ENCODE measurements at regions of chr2 and their contacts with region 1.

Region 1: DNA sequence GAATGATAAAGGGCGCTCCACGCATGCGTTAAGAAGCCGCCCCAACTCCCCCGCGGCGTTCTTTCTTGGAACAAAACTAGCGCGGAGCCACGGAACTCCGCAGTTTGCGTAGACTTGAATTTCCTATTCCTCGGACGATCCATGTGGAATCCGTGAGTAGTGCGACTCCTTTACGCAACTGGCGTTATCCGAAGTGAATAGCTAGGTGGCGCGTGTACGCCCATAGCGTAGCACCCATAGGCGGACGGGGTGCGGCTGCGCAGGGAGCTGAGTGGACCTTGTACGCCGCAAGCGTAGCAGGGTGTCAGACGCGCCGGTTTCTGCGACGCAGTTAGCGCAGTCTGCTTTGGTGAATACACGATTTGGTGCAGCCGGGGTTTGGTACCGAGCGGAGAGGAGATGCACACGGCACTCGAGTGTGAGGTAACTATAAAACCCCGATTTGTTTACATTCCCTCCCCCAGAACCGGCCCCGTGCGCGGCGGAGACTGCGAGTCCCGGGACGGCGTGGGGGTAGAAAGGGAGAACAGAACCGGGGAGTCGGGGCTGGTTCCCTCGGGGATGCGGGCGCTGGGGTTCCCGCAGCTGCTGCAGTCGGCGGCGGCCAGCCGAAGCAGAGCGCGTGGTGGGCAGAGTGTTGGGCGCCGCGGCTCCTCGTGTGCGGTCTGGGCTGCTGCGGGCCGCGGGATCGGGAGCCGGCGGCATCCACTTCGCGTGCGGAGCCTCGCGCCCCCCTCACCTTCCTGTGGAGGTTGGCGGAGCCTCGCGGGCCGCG is at the start of gene SLC39A10:
- DNase-seq: peak; percentile 99
- H3K4me3 Mint-ChIP-seq: peak within 1 kb of the TSS; percentile 98
- H3K27ac Mint-ChIP-seq: peak within 1 kb of the TSS; percentile 100
- H3K4me1 Mint-ChIP-seq: peaks cover 35% of the 10 kb centered on the region
- H3K27me3 Mint-ChIP-seq: peaks cover 3% of the 10 kb centered on the region
- total RNA-seq, gene SLC39A10: 36.1 to 37.4 TPM

Region 2: GRCh38 chr2:195318440-195319111 is 338.5 kb before region 1 on chr2:
- CTCF ChIA-PET with region 1: interaction called, 9 read pairs
- POLR2A ChIA-PET with region 1: no interaction called
- intact Hi-C with region 1: loop called (anchors 2 kb)
- DNase-seq: peak; percentile 35
- H3K4me3 Mint-ChIP-seq: no peak overlapping the region
- H3K27ac Mint-ChIP-seq: no peak overlapping the region
- H3K4me1 Mint-ChIP-seq: peaks cover 8% of the 10 kb centered on the region
- H3K27me3 Mint-ChIP-seq: no peaks in the 10 kb centered on the region

Region 3: DNA sequence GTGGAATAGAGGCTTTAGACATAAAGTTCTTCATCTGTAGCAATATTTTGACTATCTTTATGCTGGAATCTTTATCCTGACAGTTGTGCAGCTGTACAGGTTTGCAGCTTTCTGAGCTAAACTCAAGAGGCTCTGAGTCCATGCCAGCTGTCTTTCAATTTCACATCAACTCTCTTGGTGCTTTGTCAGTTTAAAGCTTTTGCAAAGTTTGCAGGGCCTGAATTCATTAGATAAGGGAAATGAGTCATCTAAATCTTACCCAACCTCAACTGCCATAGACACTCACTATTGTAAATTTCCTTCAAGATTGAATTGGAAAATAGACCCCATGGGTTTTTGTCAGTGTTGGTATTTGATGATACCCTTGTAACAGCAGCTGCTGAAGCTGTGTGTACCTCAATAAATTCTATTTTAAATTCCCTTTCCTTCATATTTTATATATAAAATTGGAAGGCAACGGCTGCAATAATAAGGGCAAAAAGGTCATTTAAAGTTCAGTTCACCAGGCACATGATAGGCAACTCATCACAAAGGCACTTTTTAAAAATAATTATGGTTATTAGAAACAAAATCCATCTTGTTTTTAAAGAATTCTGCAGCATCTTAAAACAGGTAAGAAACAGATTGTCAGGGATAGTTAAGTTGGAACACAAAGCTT is 169.9 kb before region 1 on chr2:
- CTCF ChIA-PET with region 1: interaction called, 9 read pairs
- POLR2A ChIA-PET with region 1: interaction called, 3 read pairs
- intact Hi-C with region 1: loop called (anchors 1 kb)
- DNase-seq: no peak
- H3K4me3 Mint-ChIP-seq: no peak overlapping the region
- H3K27ac Mint-ChIP-seq: peak overlapping the region; percentile 57
- H3K4me1 Mint-ChIP-seq: peaks cover 22% of the 10 kb centered on the region
- H3K27me3 Mint-ChIP-seq: no peaks in the 10 kb centered on the region

Region 4: GRCh38 chr2:195543902-195544894 is 112.8 kb before region 1 on chr2:
- CTCF ChIA-PET with region 1: interaction called, 60 read pairs
- POLR2A ChIA-PET with region 1: interaction called, 10 read pairs
- intact Hi-C with region 1: loop called (anchors 1 kb)
- DNase-seq: peak; percentile 58
- H3K4me3 Mint-ChIP-seq: peak overlapping the region; percentile 23
- H3K27ac Mint-ChIP-seq: peak overlapping the region; percentile 91
- H3K4me1 Mint-ChIP-seq: peaks cover 57% of the 10 kb centered on the region
- H3K27me3 Mint-ChIP-seq: no peaks in the 10 kb centered on the region

Region 5: DNA sequence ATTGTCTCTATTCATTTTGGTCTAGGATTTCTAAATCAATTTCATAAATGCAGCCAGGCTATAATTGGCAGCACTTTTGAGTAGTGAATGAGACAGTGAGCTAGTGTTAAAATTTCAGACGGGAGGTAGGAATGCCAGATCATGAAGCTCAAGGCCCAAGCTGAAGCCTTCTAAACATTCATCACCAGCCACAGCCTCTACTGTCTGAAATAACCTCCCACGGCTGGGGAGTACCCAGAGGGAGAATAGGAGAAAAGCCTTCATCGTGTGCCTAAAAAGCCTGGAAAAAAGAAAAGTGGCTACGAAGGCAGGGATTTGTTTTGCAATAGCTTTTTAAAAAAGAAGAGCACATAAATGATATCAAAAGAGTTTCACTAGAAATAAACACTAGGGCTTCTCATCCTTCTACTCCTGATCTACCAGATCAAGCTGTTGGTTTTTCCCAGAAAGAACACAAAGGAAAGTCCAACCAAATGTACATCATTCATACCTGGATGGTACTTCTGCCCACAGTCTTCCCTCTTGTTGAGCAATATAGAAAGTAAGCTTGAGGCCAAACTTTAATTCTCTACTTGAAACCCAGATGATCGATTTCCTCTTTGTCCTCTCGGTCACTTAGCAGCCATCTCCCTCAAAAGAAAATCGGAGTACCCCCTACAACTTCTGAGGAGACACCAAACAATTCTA is 48.1 kb before region 1 on chr2:
- CTCF ChIA-PET with region 1: interaction called, 3 read pairs
- POLR2A ChIA-PET with region 1: no interaction called
- intact Hi-C with region 1: loop called (anchors 2 kb)
- DNase-seq: no peak
- H3K4me3 Mint-ChIP-seq: no peak overlapping the region
- H3K27ac Mint-ChIP-seq: no peak overlapping the region
- H3K4me1 Mint-ChIP-seq: peaks cover 32% of the 10 kb centered on the region
- H3K27me3 Mint-ChIP-seq: no peaks in the 10 kb centered on the region

Region 6: GRCh38 chr2:196263181-196263747 is 606.2 kb after region 1 on chr2:
- CTCF ChIA-PET with region 1: no interaction called
- POLR2A ChIA-PET with region 1: no interaction called
- intact Hi-C with region 1: loop called (anchors 5 kb)
- DNase-seq: peak; percentile 62
- H3K4me3 Mint-ChIP-seq: peak overlapping the region; percentile 75
- H3K27ac Mint-ChIP-seq: peak overlapping the region; percentile 99
- H3K4me1 Mint-ChIP-seq: peaks cover 77% of the 10 kb centered on the region
- H3K27me3 Mint-ChIP-seq: no peaks in the 10 kb centered on the region